ENCODE measurements at regions of chr17 and their contacts with region 1.

Region 1: DNA sequence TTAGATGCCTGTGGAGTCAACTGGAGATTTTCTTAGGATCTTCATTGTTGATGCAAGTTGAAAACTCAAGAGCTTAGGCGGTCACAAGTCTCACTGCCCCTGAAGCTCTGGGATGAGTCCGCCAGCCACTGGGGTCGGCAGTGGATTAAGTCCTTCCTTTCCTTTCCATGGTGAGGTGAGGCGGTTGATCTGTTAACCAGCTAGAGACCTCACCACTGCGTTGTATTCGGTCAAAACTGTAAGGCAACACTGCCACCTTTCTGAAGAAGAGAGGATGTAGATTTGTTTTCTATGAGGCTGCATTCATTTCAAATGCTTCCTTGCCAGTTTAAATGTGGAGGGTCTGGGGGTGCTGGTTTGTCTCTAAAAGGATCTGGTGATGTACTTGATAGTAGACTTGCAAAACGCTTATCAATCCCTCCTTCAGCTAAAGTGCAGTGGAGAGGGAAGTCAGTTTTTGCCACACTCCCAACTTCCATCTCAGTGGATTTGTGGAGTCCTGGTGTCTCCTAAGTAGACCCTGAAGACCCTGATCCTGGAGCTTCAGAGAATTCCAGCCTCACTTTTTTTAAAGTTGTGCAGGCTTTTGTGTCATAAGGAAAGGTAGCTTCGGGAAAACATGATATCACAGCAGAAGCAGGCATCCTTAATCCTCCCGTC is 1.7 kb downstream of the MYOCD start:
- DNase-seq: peak; percentile 89
- ATAC-seq: peak; percentile 63
- H3K4me3 ChIP-seq: peak overlapping the region; percentile 94
- H3K27ac ChIP-seq: peak overlapping the region; percentile 42
- H3K4me1 ChIP-seq: peaks cover 9% of the 10 kb centered on the region
- H3K27me3 ChIP-seq: no peaks in the 10 kb centered on the region
- CTCF ChIP-seq: peak; percentile 87
- POLR2A ChIP-seq: peak; percentile 46
- RAD21 ChIP-seq: peak; percentile 93

Region 2: DNA sequence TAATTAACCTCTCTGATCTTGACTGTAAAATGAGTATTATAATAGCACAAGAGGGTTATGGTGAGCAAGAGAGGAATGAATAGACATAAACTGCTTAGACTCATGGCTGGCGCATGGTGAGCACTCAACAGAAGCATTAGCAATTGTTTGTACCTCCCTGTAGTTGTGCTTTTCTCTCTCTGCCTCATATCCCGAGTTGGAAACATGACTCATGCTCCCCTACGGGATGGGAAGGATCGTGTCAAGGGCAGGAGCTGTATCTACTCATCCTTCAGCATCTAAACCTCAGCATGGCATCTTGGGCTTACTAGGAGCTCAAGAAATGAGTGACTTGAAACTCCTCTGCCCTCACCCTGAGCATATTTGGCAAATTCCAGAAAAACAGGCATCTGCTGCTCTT is 347.1 kb before region 1 on chr17:
- CTCF ChIA-PET with region 1: no interaction called
- POLR2A ChIA-PET with region 1: no interaction called
- dilution Hi-C with region 1: no loop called
- in situ Hi-C with region 1: no loop called
- intact Hi-C with region 1: loop called (anchors 2 kb)
- DNase-seq: peak; percentile 91
- ATAC-seq: peak; percentile 86
- H3K4me3 ChIP-seq: no peak overlapping the region
- H3K27ac ChIP-seq: no peak overlapping the region
- H3K4me1 ChIP-seq: peaks cover 14% of the 10 kb centered on the region
- H3K27me3 ChIP-seq: no peaks in the 10 kb centered on the region
- CTCF ChIP-seq: no peak
- POLR2A ChIP-seq: no peak
- RAD21 ChIP-seq: peak; percentile 3; the same call in 1 of the 2 replicates

Region 3: GRCh38 chr17:12472252-12473173 is 194.9 kb before region 1 on chr17:
- CTCF ChIA-PET with region 1: no interaction called
- POLR2A ChIA-PET with region 1: no interaction called
- dilution Hi-C with region 1: no loop called
- in situ Hi-C with region 1: no loop called
- intact Hi-C with region 1: loop called (anchors 5 kb)
- DNase-seq: peak; percentile 71
- ATAC-seq: peak; percentile 88
- H3K4me3 ChIP-seq: no peak overlapping the region
- H3K27ac ChIP-seq: peak overlapping the region; percentile 71
- H3K4me1 ChIP-seq: peaks cover 8% of the 10 kb centered on the region
- H3K27me3 ChIP-seq: no peaks in the 10 kb centered on the region
- CTCF ChIP-seq: no peak
- POLR2A ChIP-seq: no peak
- RAD21 ChIP-seq: no peak

Region 4: GRCh38 chr17:12744298-12744697 is 76.9 kb after region 1 on chr17:
- CTCF ChIA-PET with region 1: interaction called, 9 read pairs
- POLR2A ChIA-PET with region 1: no interaction called
- dilution Hi-C with region 1: no loop called
- in situ Hi-C with region 1: no loop called
- intact Hi-C with region 1: loop called (anchors 1 kb)
- DNase-seq: peak; percentile 69
- ATAC-seq: peak; percentile 25
- H3K4me3 ChIP-seq: no peak overlapping the region
- H3K27ac ChIP-seq: no peak overlapping the region
- H3K4me1 ChIP-seq: peaks cover 11% of the 10 kb centered on the region
- H3K27me3 ChIP-seq: no peaks in the 10 kb centered on the region
- CTCF ChIP-seq: no peak
- POLR2A ChIP-seq: no peak
- RAD21 ChIP-seq: no peak

Measured in IMR-90 (cell line).